HepG2 (cell line): ENCODE measurements at regions of chr5 and their contacts with region 1.

Region 1: GRCh38 chr5:118987988-118988865 is at the start of gene DTWD2:
- DNase-seq: peak; percentile 92
- ATAC-seq: peak; percentile 99
- H3K4me3 ChIP-seq: peak within 1 kb of the TSS; percentile 78 to 89 (median 80)
- H3K27ac ChIP-seq: peak within 1 kb of the TSS; percentile 90
- H3K4me1 ChIP-seq: peaks cover 9% of the 10 kb centered on the region
- H3K27me3 ChIP-seq: no peaks in the 10 kb centered on the region; a peak in 1 of 5 replicates
- CTCF ChIP-seq: peak; percentile 93
- EP300 ChIP-seq: 0 out of 4 replicates have a peak, but pooled peaks have one; percentile 3 to 19
- POLR2A ChIP-seq: peak; percentile 60 to 64; a peak in 3 of 4 replicates
- RAD21 ChIP-seq: peak; percentile 96
- total RNA-seq, gene DTWD2: 6.0 and 7.9 TPM in 2 replicates

Region 2: DNA sequence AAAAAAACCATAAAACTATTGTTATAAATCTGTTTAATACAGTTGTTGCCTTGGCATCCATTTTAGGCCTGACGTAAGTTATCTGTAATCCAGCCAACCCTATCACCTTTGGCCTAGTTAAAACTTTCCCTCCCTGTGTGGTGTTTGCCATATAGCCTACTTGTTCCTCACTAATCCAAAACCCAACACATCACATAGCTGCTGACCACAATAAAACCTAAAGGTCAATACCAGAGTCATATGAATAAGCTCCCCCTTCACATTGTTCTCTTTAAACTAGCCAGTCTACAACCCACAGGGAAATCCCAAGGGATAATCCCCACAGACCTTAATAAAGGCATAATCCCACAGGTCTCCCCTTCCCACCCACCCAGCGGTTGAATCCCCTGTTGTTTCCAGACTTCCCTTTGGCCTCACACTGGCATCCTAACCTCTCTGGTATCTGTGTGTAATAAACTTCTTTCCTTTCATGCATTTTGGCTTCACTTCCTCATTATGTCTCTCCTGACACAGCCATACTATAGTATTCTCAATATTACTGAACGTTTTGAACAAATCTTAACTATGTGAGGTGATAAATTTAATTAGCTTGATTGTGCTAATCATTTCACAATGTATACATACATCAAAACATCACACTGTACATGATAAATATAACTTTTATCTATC is 50.7 kb before region 1 on chr5:
- CTCF ChIA-PET with region 1: no interaction called
- POLR2A ChIA-PET with region 1: no interaction called
- in situ Hi-C with region 1: no loop called
- intact Hi-C with region 1: no loop called
- DNase-seq: peak; percentile 43
- ATAC-seq: no peak
- H3K4me3 ChIP-seq: no peak overlapping the region
- H3K27ac ChIP-seq: no peak overlapping the region
- H3K4me1 ChIP-seq: no peaks in the 10 kb centered on the region; the same call in 1 of the 2 replicates
- H3K27me3 ChIP-seq: no peaks in the 10 kb centered on the region
- CTCF ChIP-seq: no peak
- EP300 ChIP-seq: peak in 1 of 2 experiments; percentile 13; a peak in 1 of 4 replicates
- POLR2A ChIP-seq: no peak
- RAD21 ChIP-seq: no peak

Region 3: GRCh38 chr5:119022017-119022745 is 34.0 kb after region 1 on chr5:
- CTCF ChIA-PET with region 1: interaction called, 5 read pairs
- POLR2A ChIA-PET with region 1: interaction called, 3 read pairs
- in situ Hi-C with region 1: no loop called
- intact Hi-C with region 1: loop called (anchors 1 kb)
- DNase-seq: no peak
- ATAC-seq: peak; percentile 76
- H3K4me3 ChIP-seq: no peak overlapping the region
- H3K27ac ChIP-seq: no peak overlapping the region
- H3K4me1 ChIP-seq: no peaks in the 10 kb centered on the region
- H3K27me3 ChIP-seq: no peaks in the 10 kb centered on the region
- CTCF ChIP-seq: peak; percentile 56
- EP300 ChIP-seq: no peak
- POLR2A ChIP-seq: no peak
- RAD21 ChIP-seq: peak; percentile 27; the same call in 1 of the 2 replicates

Region 4: DNA sequence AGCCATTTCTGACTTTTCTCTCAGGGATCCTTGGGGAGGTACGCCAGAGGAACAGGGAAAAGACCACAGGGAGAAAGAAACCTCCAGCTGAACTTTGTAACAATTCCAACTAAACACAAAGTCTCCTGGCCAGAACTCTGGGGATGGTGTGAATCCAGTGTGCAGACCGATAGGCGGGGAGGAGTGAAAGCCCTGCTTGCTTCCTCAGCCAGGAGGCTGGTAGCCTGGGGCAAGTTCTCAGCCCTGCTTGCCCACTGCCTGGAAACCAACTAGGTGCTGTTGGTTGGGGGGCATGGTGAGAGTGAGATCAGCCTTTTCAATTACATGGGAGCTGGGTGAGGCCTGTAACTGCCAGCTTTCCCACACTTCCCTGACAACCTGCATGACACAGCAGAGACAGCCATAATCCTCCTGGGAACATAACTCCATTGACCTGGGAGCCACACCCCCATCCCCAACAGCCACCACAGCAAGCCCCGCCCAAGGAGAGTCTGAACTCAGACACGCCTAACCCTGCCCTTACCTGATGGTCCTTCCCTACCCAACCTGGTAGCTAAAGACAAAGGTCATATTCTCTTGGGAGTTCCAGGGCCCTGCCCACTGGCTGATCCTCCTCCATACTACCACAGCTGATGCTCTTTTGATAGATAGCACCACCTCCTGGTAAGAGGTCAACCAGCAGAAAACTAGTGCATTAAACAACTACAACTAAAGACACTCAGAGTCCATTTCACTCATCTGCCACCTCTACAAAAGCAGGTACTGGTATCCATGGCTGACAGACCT is 267.5 kb after region 1 on chr5:
- CTCF ChIA-PET with region 1: interaction called, 18 read pairs
- POLR2A ChIA-PET with region 1: interaction called, 4 read pairs
- in situ Hi-C with region 1: no loop called
- intact Hi-C with region 1: loop called (anchors 1 kb)
- DNase-seq: peak; percentile 74
- ATAC-seq: peak; percentile 95
- H3K4me3 ChIP-seq: 0 out of 6 replicates have a peak overlapping the region, but pooled peaks of 1 of the 3 experiments have one; percentile 12
- H3K27ac ChIP-seq: peak overlapping the region; percentile 35
- H3K4me1 ChIP-seq: peaks cover 16% of the 10 kb centered on the region
- H3K27me3 ChIP-seq: no peaks in the 10 kb centered on the region
- CTCF ChIP-seq: peak; percentile 77
- EP300 ChIP-seq: no peak
- POLR2A ChIP-seq: no peak
- RAD21 ChIP-seq: peak; percentile 60; the same call in 1 of the 2 replicates

Region 5: DNA sequence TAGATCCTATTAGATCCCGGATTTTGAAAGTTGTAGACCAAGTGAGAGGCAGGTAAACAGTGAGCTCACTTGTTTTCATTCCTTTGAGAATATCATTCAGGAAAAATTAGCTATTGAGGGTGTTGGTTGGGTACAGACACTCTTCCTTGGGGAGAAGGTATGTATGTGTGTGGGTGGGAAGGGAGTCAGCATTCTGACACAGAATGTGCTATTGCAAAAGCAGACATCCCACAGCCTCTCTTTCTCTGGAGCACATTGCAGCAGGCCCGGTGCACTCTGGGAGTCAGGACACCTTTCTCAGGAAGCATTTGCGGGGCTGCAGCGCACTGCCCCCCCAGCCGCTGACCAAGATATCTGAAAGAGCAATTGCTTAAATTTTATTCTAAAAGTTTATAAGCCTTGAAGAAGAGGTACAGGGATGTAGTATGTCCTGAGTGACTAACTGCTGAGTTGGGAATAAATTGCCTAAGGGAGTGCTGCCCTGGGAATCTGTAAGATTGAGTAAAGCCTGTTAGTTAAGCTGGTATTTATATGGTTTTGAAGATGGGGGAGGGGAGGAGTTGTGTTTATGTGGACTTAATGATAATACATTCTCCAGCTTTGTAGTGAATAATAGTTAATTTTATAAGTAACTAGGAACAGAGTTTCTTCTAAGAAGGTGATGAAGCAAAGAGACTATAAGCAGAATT is 372.8 kb after region 1 on chr5:
- CTCF ChIA-PET with region 1: no interaction called
- POLR2A ChIA-PET with region 1: no interaction called
- in situ Hi-C with region 1: no loop called
- intact Hi-C with region 1: no loop called
- DNase-seq: no peak
- ATAC-seq: no peak
- H3K4me3 ChIP-seq: no peak overlapping the region
- H3K27ac ChIP-seq: no peak overlapping the region
- H3K4me1 ChIP-seq: peaks cover 10% of the 10 kb centered on the region
- H3K27me3 ChIP-seq: no peaks in the 10 kb centered on the region
- CTCF ChIP-seq: no peak
- EP300 ChIP-seq: no peak
- POLR2A ChIP-seq: no peak
- RAD21 ChIP-seq: no peak

Region 6: DNA sequence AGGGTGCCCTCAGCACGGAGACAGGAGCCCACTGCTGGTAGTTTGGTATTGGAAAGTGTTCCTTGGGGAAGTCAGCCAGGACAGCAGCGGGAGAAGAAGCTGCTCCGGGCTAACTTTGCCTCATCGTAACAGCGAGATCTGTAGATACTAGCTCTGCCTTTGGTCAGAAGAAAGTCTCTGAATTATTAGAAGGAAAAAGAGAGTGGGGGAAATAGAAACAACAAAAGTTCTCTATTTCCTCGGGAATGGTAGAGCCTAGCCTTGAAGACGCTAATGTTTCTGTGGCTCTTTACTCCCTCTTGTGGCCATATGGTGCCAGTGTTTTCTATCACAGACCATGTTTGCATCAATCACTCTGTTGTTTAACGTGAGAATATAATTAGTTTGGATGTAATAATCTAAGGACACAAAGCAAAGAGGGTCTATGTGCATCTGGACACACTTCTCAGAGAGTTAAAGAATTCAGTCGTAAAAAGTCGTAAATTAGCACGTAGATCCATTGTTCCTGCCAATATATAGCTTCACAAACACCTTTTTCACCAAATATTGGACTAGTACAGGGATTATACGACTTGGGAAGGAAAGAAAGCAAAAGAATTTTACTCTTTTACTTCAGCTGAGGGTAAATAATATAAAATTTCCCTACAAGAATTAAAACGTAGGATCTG is 423.8 kb after region 1 on chr5:
- CTCF ChIA-PET with region 1: interaction called, 44 read pairs
- POLR2A ChIA-PET with region 1: no interaction called
- in situ Hi-C with region 1: loop called (anchors 10 kb)
- intact Hi-C with region 1: loop called (anchors 1 kb)
- DNase-seq: peak; percentile 57
- ATAC-seq: peak; percentile 93
- H3K4me3 ChIP-seq: peak overlapping the region; percentile 44 to 61 (median 53)
- H3K27ac ChIP-seq: no peak overlapping the region
- H3K4me1 ChIP-seq: peaks cover 15% of the 10 kb centered on the region
- H3K27me3 ChIP-seq: 0 out of 5 replicates have a peak, but pooled peaks cover 0 to 1% of the 10 kb centered on the region in 2 experiments
- CTCF ChIP-seq: peak; percentile 87
- EP300 ChIP-seq: no peak
- POLR2A ChIP-seq: no peak
- RAD21 ChIP-seq: peak; percentile 79

Region 7: GRCh38 chr5:120457839-120458507 is 1469.7 kb after region 1 on chr5:
- CTCF ChIA-PET with region 1: no interaction called
- POLR2A ChIA-PET with region 1: no interaction called
- in situ Hi-C with region 1: no loop called
- intact Hi-C with region 1: loop called (anchors 5 kb)
- DNase-seq: peak; percentile 46
- ATAC-seq: peak; percentile 98
- H3K4me3 ChIP-seq: peak overlapping the region; percentile 15 to 70 (median 60); a peak in 5 of 6 replicates
- H3K27ac ChIP-seq: no peak overlapping the region
- H3K4me1 ChIP-seq: 0 out of 2 replicates have a peak, but pooled peaks cover 5% of the 10 kb centered on the region
- H3K27me3 ChIP-seq: peaks cover 0 to 3% of the 10 kb centered on the region in 2 experiments; a peak in 2 of 5 replicates
- CTCF ChIP-seq: peak; percentile 90
- EP300 ChIP-seq: no peak
- POLR2A ChIP-seq: no peak
- RAD21 ChIP-seq: peak; percentile 78